ENCODE measurements at regions of chr2 and their contacts with region 1.

Region 1: GRCh38 chr2:219294356-219295351 is 14.5 kb downstream of the PTPRN start:
- DNase-seq: peak; percentile 79 to 84 (median 80)
- H3K4me3 ChIP-seq: peak overlapping the region; percentile 43 to 76 (median 48)
- H3K4me3 Mint-ChIP-seq: peak overlapping the region; percentile 79 to 95
- H3K27ac ChIP-seq: peak overlapping the region in 1 of 2 donors; percentile 31
- H3K27ac Mint-ChIP-seq: peak overlapping the region in 6 of 7 donors; percentile 41 to 80 (median 66)
- H3K4me1 ChIP-seq: peaks cover 10 to 15% of the 10 kb centered on the region in 2 donors
- H3K4me1 Mint-ChIP-seq: peaks cover 11% of the 10 kb centered on the region
- H3K27me3 ChIP-seq: peaks cover 0 to 28% of the 10 kb centered on the region in 2 donors
- H3K27me3 Mint-ChIP-seq: peaks cover 34 to 63% (median 38%) of the 10 kb centered on the region in 3 donors
- CTCF ChIP-seq: peak; percentile 100

Region 2: GRCh38 chr2:219160186-219161017 is 134.3 kb before region 1 on chr2 and contains the start of gene NHEJ1:
- intact Hi-C with region 1: loop called (anchors 5 kb)
- DNase-seq: peak; percentile 85 to 92 (median 89)
- H3K4me3 ChIP-seq: peak within 1 kb of the TSS; percentile 60 to 87 (median 80)
- H3K4me3 Mint-ChIP-seq: peak within 1 kb of the TSS; percentile 93
- H3K27ac ChIP-seq: peak within 1 kb of the TSS; percentile 71 to 81
- H3K27ac Mint-ChIP-seq: peak within 1 kb of the TSS; percentile 87 to 97 (median 95)
- H3K4me1 ChIP-seq: peaks cover 15 to 18% of the 10 kb centered on the region in 2 donors
- H3K4me1 Mint-ChIP-seq: peaks cover 17% of the 10 kb centered on the region
- H3K27me3 ChIP-seq: no peaks in the 10 kb centered on the region
- H3K27me3 Mint-ChIP-seq: peaks cover 0 to 5% (median 2%) of the 10 kb centered on the region in 3 donors
- CTCF ChIP-seq: peak; percentile 99
- polyA plus RNA-seq, gene NHEJ1: 12.6 to 20.9 (median 20.3) TPM

Region 3: DNA sequence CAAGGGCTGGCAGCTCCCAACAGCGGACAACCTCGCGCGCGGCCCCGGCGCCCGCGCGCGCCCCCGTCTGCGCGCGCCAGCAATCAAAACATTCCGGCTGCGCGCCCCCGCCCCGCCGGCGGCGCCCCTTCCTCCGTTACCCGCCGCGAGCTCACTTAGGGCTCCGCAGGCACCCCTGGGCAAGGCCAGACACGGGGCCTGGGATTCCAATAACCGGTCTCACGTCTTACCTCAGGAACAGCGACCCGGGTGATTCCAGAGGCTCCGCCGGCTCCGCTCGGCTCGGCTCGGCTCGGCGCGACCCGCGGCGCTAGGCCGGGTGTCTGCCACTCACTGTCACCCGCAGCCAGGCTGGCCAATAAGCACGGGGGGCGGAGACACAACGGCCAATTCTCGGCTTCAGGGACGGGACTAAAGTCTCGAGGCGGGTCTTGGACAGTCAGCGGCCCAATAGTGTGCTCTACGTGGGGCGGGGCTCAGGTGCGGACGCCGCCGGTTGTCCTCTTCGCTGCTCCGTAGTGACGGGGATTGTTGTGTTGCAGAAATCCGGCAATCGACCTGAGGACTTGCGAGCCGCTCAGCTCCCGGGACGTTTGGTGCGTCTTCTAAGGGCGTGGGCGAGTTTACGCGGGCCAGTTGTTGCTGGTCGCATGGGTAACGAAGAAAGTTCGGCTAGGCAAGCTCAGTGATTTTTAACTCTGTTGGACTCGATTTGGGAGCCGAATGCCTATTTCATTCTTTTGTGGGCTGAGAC is 65.2 kb before region 1 on chr2 and contains the starts of genes ANKZF1 and ATG9A:
- intact Hi-C with region 1: loop called in 1 of 2 experiments (anchors 5 kb)
- DNase-seq: peak; percentile 95 to 98 (median 96)
- H3K4me3 ChIP-seq: peak within 1 kb of the TSS; percentile 80 to 89 (median 81)
- H3K4me3 Mint-ChIP-seq: peak within 1 kb of the TSS; percentile 95 to 98
- H3K27ac ChIP-seq: peak within 1 kb of the TSS; percentile 67 to 86
- H3K27ac Mint-ChIP-seq: peak within 1 kb of the TSS; percentile 88 to 99 (median 96)
- H3K4me1 ChIP-seq: peaks cover 45 to 48% of the 10 kb centered on the region in 2 donors
- H3K4me1 Mint-ChIP-seq: peaks cover 51% of the 10 kb centered on the region
- H3K27me3 ChIP-seq: peaks cover 0 to 12% of the 10 kb centered on the region in 2 donors
- H3K27me3 Mint-ChIP-seq: peaks cover 16 to 26% (median 22%) of the 10 kb centered on the region in 3 donors
- CTCF ChIP-seq: no peak
- polyA plus RNA-seq, gene ANKZF1: 7.6 to 79.3 (median 10.4) TPM
- polyA plus RNA-seq, gene ATG9A: 24.7 to 55.2 (median 26.3) TPM

Region 4: GRCh38 chr2:219278655-219279516 is 15.8 kb before region 1 on chr2 and contains the start of gene DNAJB2:
- intact Hi-C with region 1: loop called (anchors 2 kb)
- DNase-seq: peak; percentile 99 to 100 (median 100)
- H3K4me3 ChIP-seq: peak within 1 kb of the TSS; percentile 54 to 77 (median 57)
- H3K4me3 Mint-ChIP-seq: peak within 1 kb of the TSS; percentile 88 to 91
- H3K27ac ChIP-seq: peak within 1 kb of the TSS; percentile 85 to 97
- H3K27ac Mint-ChIP-seq: peak within 1 kb of the TSS; percentile 92 to 98 (median 97)
- H3K4me1 ChIP-seq: peaks cover 23 to 31% of the 10 kb centered on the region in 2 donors
- H3K4me1 Mint-ChIP-seq: peaks cover 29% of the 10 kb centered on the region
- H3K27me3 ChIP-seq: no peaks in the 10 kb centered on the region
- H3K27me3 Mint-ChIP-seq: peaks cover 2 to 7% (median 7%) of the 10 kb centered on the region in 3 donors
- CTCF ChIP-seq: no peak
- polyA plus RNA-seq, gene DNAJB2: 1.7 to 55.4 (median 1.9) TPM

Region 5: DNA sequence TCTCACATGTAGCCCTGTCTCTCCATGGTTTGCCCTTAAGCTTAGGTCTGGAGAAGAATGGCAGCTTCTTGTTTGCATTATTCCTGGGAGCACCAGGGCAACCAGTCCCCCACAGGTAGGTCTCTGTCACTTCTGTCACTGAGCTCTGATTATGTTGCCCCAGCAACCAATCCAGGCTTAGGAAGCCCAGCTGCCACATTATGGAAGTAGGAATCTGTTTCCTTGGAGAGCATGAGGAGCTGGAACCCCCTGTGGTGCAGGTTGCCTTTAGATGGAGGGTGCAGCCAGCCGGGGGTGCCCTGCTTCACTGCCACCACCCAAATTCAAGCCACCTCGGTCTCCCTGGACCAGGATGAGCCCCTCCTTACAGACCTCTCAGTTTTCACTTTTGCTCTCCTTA is 33.1 kb after region 1 on chr2:
- intact Hi-C with region 1: no loop called
- DNase-seq: no peak
- H3K4me3 ChIP-seq: no peak overlapping the region
- H3K4me3 Mint-ChIP-seq: no peak overlapping the region
- H3K27ac ChIP-seq: no peak overlapping the region
- H3K27ac Mint-ChIP-seq: peak overlapping the region in 1 of 7 donors; percentile 9
- H3K4me1 ChIP-seq: no peaks in the 10 kb centered on the region
- H3K4me1 Mint-ChIP-seq: peaks cover 4% of the 10 kb centered on the region
- H3K27me3 ChIP-seq: peaks cover 26 to 53% of the 10 kb centered on the region in 2 donors
- H3K27me3 Mint-ChIP-seq: peaks cover 47 to 66% (median 54%) of the 10 kb centered on the region in 3 donors
- CTCF ChIP-seq: no peak

Region 6: DNA sequence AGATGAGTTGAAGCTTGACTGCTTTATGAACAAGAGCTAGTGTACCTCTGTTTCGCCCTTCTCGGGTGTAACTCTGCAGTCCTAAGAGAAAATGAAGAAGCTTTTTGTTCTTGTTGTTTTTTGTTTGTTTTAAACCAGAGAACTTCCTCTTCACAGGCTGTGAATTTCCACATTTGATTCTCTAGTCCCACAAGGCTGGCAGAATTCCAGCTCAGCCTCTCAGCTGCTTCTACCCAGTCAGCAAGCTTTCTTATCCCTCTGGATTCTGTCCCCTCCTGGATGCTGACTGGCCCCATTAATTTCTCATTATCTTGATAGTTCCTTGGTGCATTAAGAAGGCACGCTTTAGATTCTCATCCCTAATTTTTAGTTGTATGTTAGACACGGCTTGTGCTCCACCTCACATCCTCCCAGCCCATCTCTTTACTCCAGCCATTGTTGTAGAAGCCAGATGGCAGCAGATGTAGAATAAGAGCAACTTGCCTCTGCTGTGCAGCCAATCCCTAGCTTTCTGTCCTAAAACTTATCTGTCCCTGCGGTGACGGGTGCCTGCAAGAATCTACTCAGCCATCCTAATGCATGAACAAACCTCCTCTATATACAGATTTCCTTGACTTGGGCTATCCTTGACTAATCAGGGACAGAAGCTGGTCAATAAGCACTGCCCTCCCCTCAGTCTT is 50.2 kb after region 1 on chr2:
- intact Hi-C with region 1: no loop called
- DNase-seq: peak; percentile 38 to 74 (median 57)
- H3K4me3 ChIP-seq: peak overlapping the region in 2 of 3 experiments; percentile 9 to 50
- H3K4me3 Mint-ChIP-seq: peak overlapping the region in 1 of 2 donors; percentile 77
- H3K27ac ChIP-seq: peak overlapping the region in 1 of 2 donors; percentile 67
- H3K27ac Mint-ChIP-seq: peak overlapping the region; percentile 33 to 85 (median 69)
- H3K4me1 ChIP-seq: peaks cover 22% of the 10 kb centered on the region in 2 donors
- H3K4me1 Mint-ChIP-seq: peaks cover 21% of the 10 kb centered on the region
- H3K27me3 ChIP-seq: peaks cover 9 to 21% of the 10 kb centered on the region in 2 donors
- H3K27me3 Mint-ChIP-seq: peaks cover 18 to 49% (median 45%) of the 10 kb centered on the region in 3 donors
- CTCF ChIP-seq: no peak

Measured in CD14-positive monocyte (primary cell).